Esophagus squamous epithelium (tissue), 5 donors: ENCODE measurements at regions of chr6 and their contacts with region 1.

Region 1: DNA sequence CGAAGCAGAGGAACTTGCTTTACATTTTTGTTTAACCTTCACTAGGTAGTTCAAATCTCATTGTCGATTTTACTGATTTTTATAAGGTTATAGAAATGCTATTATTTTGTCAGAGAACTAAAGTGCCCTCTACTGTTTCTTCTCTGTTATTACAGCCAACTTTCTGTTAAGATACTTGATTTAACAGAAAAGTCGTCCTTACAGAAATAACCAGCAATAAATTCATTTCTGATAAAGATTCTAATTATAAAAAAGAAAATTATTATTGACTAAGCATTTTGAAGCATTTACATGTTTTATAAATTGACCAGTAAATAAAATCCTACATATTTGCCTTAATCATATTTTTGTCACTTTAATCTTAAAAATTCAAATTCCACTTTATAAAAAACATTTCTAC is 60.8 kb downstream of the OGFRL1 start:
- DNase-seq: no peak
- H3K4me3 ChIP-seq: no peak overlapping the region
- H3K27ac ChIP-seq: peak overlapping the region in 2 of 4 donors; percentile 57 to 62
- H3K4me1 ChIP-seq: peaks cover 0 to 24% (median 0%) of the 10 kb centered on the region in 3 donors
- H3K27me3 ChIP-seq: no peaks in the 10 kb centered on the region
- CTCF ChIP-seq: peak in 5 of 6 experiments; percentile 34 to 78 (median 76)
- POLR2A ChIP-seq: no peak

Region 2: DNA sequence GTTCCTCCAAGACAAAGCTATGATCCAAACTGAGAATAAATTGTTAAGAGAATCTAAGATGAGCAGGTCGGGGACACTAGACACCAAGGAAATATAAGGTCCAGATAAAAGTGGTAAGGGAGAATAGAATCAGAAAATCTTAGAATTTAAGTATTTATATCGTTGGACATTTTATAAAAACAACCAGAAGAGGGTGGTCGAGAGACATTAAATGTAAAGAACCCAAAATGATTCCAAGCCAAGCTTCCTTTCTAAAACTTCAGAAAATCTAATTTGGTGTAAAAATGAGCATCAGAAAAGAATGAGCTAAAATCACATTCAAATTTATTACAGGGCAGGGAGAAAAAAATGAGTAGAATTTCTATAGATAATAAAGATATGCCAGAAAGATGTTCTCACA is 158.6 kb before region 1 on chr6:
- intact Hi-C with region 1: loop called (anchors 10 kb)
- DNase-seq: no peak
- H3K4me3 ChIP-seq: no peak overlapping the region
- H3K27ac ChIP-seq: no peak overlapping the region
- H3K4me1 ChIP-seq: no peaks in the 10 kb centered on the region
- H3K27me3 ChIP-seq: no peaks in the 10 kb centered on the region
- CTCF ChIP-seq: peak in 4 of 6 experiments; percentile 30 to 47 (median 38)
- POLR2A ChIP-seq: no peak

Region 3: DNA sequence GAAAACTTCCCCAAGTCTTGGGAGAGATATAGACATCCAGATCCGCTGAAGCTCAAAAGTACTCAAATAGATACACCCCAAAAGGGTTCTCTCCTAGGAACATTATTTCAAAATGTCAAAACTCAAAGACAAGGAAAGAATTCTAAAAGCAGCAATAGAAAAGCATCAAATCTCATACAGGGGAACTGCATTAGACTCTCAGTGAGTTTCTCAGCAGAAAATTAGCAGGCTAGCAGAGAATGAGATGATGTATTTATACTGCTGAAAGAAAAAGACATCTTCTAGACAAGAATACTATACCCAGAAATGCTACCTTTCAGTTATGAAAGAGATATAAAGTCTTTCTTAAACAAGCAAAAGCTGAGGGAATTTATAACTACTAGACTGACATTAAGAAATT is 461.5 kb after region 1 on chr6:
- intact Hi-C with region 1: no loop called
- DNase-seq: no peak
- H3K4me3 ChIP-seq: no peak overlapping the region
- H3K27ac ChIP-seq: no peak overlapping the region
- H3K4me1 ChIP-seq: no peaks in the 10 kb centered on the region
- H3K27me3 ChIP-seq: no peaks in the 10 kb centered on the region
- CTCF ChIP-seq: no peak
- POLR2A ChIP-seq: no peak